Right ventricle myocardium superior (tissue), 1 donor: ENCODE measurements at regions of chr17 and their contacts with region 1.

Region 1: GRCh38 chr17:7296189-7296902 is 1.9 kb upstream of the YBX2 start:
- DNase-seq: peak; percentile 89
- ATAC-seq: peak; percentile 88

Region 2: GRCh38 chr17:7280519-7281429 is 15.6 kb before region 1 on chr17:
- intact Hi-C with region 1: loop called (anchors 1 kb)
- DNase-seq: peak; percentile 90
- ATAC-seq: peak; percentile 67